Common myeloid progenitor, CD34-positive (primary cell): ENCODE measurements at regions of chr3 and their contacts with region 1.

Region 1: GRCh38 chr3:4674216-4674615 is 181.1 kb downstream of the ITPR1 start:
- DNase-seq: no peak
- H3K4me3 ChIP-seq: no peak overlapping the region
- H3K27ac ChIP-seq: no peak overlapping the region
- H3K4me1 ChIP-seq: no peaks in the 10 kb centered on the region
- H3K27me3 ChIP-seq: no peaks in the 10 kb centered on the region

Region 2: GRCh38 chr3:4524088-4525023 is 149.9 kb before region 1 on chr3:
- CTCF ChIA-PET with region 1: no interaction called
- POLR2A ChIA-PET with region 1: no interaction called
- DNase-seq: peak in 1 of 3 donors; percentile 36
- H3K4me3 ChIP-seq: peak overlapping the region in 1 of 7 experiments; percentile 29
- H3K27ac ChIP-seq: no peak overlapping the region
- H3K4me1 ChIP-seq: peaks cover 24 to 59% (median 41%) of the 10 kb centered on the region in 4 experiments
- H3K27me3 ChIP-seq: no peaks in the 10 kb centered on the region

Region 3: DNA sequence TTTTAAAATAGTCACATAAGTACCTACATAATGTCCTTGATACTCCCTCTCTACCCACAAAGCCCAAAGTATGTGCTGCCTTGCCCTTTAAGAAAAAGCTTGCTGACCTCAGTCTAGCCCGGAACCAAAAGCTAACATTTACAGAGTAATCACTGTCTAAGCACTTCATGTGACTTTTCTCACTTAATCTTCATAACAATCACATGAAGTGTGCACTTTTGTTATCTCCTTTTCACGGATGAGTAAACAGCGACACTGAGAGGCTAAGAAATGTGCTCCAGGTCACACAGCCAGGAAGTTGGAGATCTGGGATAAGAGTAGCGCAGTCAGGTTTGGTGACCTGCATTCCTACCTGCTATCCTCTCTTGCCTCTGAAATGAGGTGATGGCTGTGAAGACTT is 13.0 kb after region 1 on chr3:
- CTCF ChIA-PET with region 1: interaction called, 33 read pairs
- POLR2A ChIA-PET with region 1: interaction called, 4 read pairs
- DNase-seq: no peak
- H3K4me3 ChIP-seq: no peak overlapping the region
- H3K27ac ChIP-seq: no peak overlapping the region
- H3K4me1 ChIP-seq: no peaks in the 10 kb centered on the region
- H3K27me3 ChIP-seq: no peaks in the 10 kb centered on the region

Region 4: DNA sequence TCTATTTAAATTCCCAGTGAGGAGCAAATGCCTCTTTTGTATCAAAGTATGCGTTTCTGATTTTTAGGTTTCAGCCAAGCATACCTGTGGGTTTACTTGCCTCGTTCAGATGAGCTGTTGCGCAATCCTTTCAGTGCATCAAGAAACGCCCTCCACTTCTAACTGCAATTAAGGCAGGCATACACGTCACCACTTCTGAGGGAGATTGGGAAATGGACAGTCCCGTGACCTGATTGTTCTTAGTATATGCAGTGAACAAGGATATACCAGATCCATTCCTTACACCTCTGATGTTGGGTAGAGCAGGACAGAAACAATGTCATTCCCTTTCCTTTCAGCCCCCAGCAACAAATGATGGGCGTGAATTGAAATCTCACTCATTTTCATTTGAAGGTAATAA is 37.9 kb after region 1 on chr3:
- CTCF ChIA-PET with region 1: no interaction called
- POLR2A ChIA-PET with region 1: no interaction called
- DNase-seq: no peak
- H3K4me3 ChIP-seq: no peak overlapping the region
- H3K27ac ChIP-seq: no peak overlapping the region
- H3K4me1 ChIP-seq: peaks cover 0 to 14% (median 6%) of the 10 kb centered on the region in 4 experiments
- H3K27me3 ChIP-seq: no peaks in the 10 kb centered on the region

Region 5: GRCh38 chr3:4741404-4742307 is 67.4 kb after region 1 on chr3:
- CTCF ChIA-PET with region 1: no interaction called
- POLR2A ChIA-PET with region 1: no interaction called
- DNase-seq: peak; percentile 63 to 84 (median 75)
- H3K4me3 ChIP-seq: peak overlapping the region in 2 of 7 experiments; percentile 12 to 29
- H3K27ac ChIP-seq: peak overlapping the region; percentile 41 to 83
- H3K4me1 ChIP-seq: peaks cover 17 to 73% (median 56%) of the 10 kb centered on the region in 4 experiments
- H3K27me3 ChIP-seq: no peaks in the 10 kb centered on the region